ENCODE measurements at regions of chr2 and their contacts with region 1.

Region 1: DNA sequence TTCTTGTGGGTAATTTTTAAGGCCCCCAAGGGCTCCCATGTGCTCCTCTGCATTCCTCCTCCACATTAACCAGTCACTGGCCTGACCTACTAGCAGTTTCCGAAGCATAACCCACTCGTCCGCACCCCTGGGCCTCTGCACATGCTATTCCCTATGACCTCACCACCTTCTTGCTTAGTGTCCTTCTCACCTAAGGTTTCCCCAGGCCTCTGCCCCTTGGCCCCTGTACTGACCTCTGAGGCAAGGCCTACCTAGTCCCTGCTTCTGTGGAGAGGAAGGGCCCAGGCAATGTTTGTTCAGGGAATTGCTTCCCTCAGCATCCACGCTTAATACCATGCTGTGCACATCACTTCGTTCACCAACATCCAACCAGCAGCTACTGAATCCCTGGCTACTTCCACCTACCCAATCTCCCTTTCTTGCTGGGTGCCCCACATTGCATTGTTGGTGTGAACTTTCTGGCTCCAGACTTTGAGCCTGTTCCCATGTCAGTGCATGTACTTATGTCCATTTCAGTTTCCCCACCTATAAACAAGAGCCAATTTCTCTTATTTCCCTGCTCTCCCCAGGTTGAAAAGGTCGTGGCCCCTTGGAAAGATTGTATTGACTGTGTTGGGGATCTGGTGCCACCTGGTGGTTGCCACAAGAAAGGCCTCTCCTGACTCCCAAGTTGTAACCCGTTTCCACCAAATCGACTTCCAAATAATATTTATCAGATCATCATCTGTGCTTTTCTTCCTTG is 19.2 kb upstream of the TMEM177 start:
- DNase-seq: no peak
- ATAC-seq: peak in 1 of 2 donors; percentile 56
- H3K4me3 ChIP-seq: no peak overlapping the region
- H3K27ac ChIP-seq: no peak overlapping the region
- H3K4me1 ChIP-seq: no peaks in the 10 kb centered on the region
- H3K27me3 ChIP-seq: no peaks in the 10 kb centered on the region
- CTCF ChIP-seq: peak; percentile 55 to 87 (median 65)
- POLR2A ChIP-seq: no peak

Region 2: GRCh38 chr2:119407430-119408220 is 252.1 kb before region 1 on chr2:
- in situ Hi-C with region 1: loop called in 3 of 4 experiments (anchors 10 to 25 kb)
- intact Hi-C with region 1: loop called (anchors 2 kb)
- DNase-seq: peak in 1 of 2 donors; percentile 20
- ATAC-seq: peak; percentile 82 to 89
- H3K4me3 ChIP-seq: no peak overlapping the region
- H3K27ac ChIP-seq: no peak overlapping the region
- H3K4me1 ChIP-seq: peaks cover 0 to 4% of the 10 kb centered on the region in 2 donors
- H3K27me3 ChIP-seq: no peaks in the 10 kb centered on the region
- CTCF ChIP-seq: peak; percentile 72 to 85 (median 82)
- POLR2A ChIP-seq: no peak

Region 3: DNA sequence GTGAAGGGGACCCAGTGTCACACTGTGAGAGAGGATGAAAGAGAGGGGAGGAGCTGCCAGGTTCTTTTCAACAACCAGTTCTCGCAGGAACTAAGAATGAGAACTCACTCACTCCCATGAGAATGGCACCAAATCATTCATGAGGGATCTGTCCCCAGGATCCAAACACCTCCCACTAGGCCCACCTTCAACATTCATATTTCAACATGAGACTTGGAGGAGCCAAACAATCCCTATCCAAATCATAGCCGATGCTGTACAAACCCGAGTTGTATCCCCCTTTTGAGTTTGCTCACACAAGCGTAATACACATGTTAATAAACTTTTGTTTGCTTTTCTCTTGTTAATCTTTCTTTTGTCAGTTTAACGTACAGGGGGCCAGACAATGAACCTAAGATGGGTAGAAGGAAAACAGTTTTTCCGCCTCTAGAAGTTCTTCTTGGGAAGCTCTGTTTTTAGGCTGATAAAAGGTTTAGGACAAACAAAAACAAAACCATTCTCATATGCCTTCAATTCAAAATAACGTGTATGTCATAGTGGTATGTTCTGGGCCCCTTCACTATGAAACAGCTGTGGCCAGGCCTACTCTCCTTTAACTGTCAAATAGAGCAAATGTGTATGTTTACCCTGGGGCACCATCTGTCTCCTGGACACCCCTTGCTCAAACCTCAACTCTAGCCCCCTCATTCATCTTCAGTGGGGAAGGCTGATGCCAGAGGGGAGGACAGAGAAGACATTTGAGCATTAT is 237.2 kb before region 1 on chr2:
- in situ Hi-C with region 1: loop called (anchors 5 to 25 kb)
- intact Hi-C with region 1: no loop called
- DNase-seq: no peak
- ATAC-seq: no peak
- H3K4me3 ChIP-seq: no peak overlapping the region
- H3K27ac ChIP-seq: no peak overlapping the region
- H3K4me1 ChIP-seq: no peaks in the 10 kb centered on the region
- H3K27me3 ChIP-seq: no peaks in the 10 kb centered on the region
- CTCF ChIP-seq: no peak
- POLR2A ChIP-seq: no peak

Region 4: GRCh38 chr2:119525614-119526013 is 134.2 kb before region 1 on chr2:
- in situ Hi-C with region 1: no loop called
- intact Hi-C with region 1: loop called (anchors 5 kb)
- DNase-seq: no peak
- ATAC-seq: no peak
- H3K4me3 ChIP-seq: no peak overlapping the region
- H3K27ac ChIP-seq: no peak overlapping the region
- H3K4me1 ChIP-seq: peaks cover 0 to 15% of the 10 kb centered on the region in 2 donors
- H3K27me3 ChIP-seq: peaks cover 21 to 30% (median 28%) of the 10 kb centered on the region in 3 donors
- CTCF ChIP-seq: no peak
- POLR2A ChIP-seq: no peak

Region 5: GRCh38 chr2:119641562-119642258 is 18.1 kb before region 1 on chr2:
- in situ Hi-C with region 1: no loop called
- intact Hi-C with region 1: loop called (anchors 2 kb)
- DNase-seq: peak; percentile 28 to 36
- ATAC-seq: peak; percentile 82 to 84
- H3K4me3 ChIP-seq: no peak overlapping the region
- H3K27ac ChIP-seq: no peak overlapping the region
- H3K4me1 ChIP-seq: peaks cover 0 to 4% of the 10 kb centered on the region in 2 donors
- H3K27me3 ChIP-seq: no peaks in the 10 kb centered on the region
- CTCF ChIP-seq: peak; percentile 59 to 92 (median 71)
- POLR2A ChIP-seq: no peak

Measured in gastrocnemius medialis (tissue), 4 donors.